Sigmoid colon (tissue), 7 donors: ENCODE measurements at regions of chr3 and their contacts with region 1.

Region 1: GRCh38 chr3:152524198-152525140 is 255.7 kb downstream of the MBNL1 start:
- DNase-seq: no peak
- H3K4me3 ChIP-seq: no peak overlapping the region
- H3K27ac ChIP-seq: no peak overlapping the region
- H3K4me1 ChIP-seq: peaks cover 0 to 8% (median 0%) of the 10 kb centered on the region in 4 donors
- H3K27me3 ChIP-seq: no peaks in the 10 kb centered on the region
- CTCF ChIP-seq: peak; percentile 65 to 90 (median 82)
- EP300 ChIP-seq: no peak
- POLR2A ChIP-seq: no peak

Region 2: DNA sequence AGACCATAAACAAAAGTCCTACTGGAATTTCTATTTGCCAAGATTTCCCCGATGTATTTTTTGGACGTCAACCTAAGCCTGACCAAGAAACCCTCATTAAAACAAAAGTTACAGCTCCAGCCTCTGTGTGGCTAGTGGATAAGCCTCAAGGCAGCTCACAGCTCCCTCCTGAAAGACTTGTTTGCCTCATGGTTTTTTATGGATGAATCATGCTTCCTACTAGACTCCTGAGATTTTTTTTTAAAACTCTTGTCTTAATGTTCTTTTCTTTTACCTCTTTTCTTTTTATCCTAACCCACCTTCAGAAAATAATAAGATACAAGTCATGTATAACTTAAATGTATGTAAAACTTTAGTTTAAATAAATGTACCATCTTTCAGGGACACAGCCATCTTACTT is 598.6 kb before region 1 on chr3:
- intact Hi-C with region 1: loop called (anchors 10 kb)
- DNase-seq: no peak
- H3K4me3 ChIP-seq: no peak overlapping the region
- H3K27ac ChIP-seq: peak overlapping the region in 1 of 4 donors; percentile 27
- H3K4me1 ChIP-seq: peaks cover 0 to 39% (median 14%) of the 10 kb centered on the region in 4 donors
- H3K27me3 ChIP-seq: no peaks in the 10 kb centered on the region
- CTCF ChIP-seq: no peak
- EP300 ChIP-seq: no peak
- POLR2A ChIP-seq: no peak

Region 3: DNA sequence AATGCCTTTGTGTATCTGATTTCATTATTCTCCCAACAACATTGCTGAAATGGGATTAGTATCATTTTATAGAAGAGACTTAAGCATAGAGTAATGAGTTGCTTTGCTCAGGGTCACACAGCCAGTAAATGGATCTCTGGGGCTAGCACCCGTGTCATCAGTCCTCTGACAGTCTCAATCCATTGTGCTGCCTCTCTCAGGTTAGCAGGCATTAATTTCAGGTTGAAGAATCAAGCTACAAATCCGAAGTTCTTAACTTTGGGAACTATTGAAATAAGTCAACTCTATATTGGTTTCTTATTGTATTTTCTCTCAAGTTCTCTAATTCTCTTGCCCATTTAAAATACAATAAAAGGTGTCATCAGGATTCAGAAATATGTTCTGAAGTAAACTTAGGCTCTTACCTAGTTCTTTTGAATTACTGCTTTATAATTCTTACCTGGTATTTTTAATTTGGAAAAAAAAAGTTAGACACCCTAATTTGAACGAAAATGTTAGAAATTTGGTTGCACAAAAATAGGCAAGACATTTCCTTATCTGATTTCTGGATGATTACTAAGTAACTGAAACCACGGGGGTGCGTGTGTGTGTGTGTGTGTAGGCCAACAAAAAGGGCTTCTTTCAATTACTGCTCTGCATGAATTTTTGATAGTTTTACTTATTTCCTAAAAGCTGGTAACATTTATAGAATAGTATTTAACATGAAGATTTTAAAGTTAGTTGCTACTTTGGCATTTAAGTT is 65.9 kb before region 1 on chr3:
- intact Hi-C with region 1: no loop called
- DNase-seq: no peak
- H3K4me3 ChIP-seq: no peak overlapping the region
- H3K27ac ChIP-seq: peak overlapping the region in 2 of 4 donors; percentile 42 to 44
- H3K4me1 ChIP-seq: peaks cover 0 to 89% (median 57%) of the 10 kb centered on the region in 4 donors
- H3K27me3 ChIP-seq: no peaks in the 10 kb centered on the region
- CTCF ChIP-seq: no peak
- EP300 ChIP-seq: no peak
- POLR2A ChIP-seq: no peak

Region 4: DNA sequence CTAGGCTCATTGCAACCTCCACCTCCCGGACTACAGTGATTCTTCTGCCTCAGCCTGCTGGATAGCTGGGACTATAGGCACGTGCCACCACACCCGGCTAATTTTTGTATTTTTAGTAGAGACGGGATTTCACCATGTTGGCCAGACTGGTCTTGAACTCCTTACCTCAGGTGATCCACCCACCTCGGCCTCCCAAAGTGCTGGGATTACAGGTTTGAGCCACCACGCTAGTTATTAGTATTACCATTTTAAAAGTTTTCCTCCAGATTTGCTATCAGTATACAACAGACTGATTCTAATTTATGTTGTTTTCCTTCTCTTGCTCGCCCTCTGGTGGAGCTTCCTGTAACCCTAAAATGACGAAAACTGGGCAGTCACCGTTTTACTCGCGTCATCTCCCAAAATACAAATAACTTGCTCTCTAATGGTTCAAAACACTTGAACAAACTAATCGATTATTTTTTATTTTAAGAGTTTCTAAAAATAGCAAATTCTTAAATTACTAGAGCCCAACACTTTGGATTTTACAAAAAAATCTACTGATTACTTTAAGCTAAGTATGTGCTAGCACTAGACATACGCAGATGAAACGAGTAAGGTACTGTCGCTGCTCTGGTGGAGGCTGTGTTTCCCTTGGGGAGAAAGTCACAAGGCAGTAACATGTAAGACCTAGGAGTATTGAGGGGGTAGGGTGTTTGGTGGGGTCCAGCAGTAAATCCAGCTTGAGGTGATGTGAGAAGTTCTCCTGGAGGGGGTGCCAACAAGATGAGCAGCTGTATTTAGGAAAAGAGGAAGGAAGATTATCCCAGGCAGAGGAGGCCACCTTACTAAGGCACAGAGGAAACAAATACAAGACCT is 52.4 kb before region 1 on chr3:
- intact Hi-C with region 1: loop called (anchors 5 kb)
- DNase-seq: peak; percentile 73
- H3K4me3 ChIP-seq: peak overlapping the region in 3 of 4 donors; percentile 8 to 16 (median 15)
- H3K27ac ChIP-seq: peak overlapping the region in 2 of 4 donors; percentile 43 to 44
- H3K4me1 ChIP-seq: no peaks in the 10 kb centered on the region
- H3K27me3 ChIP-seq: no peaks in the 10 kb centered on the region
- CTCF ChIP-seq: peak in 3 of 4 experiments; percentile 48 to 67 (median 59)
- EP300 ChIP-seq: no peak
- POLR2A ChIP-seq: no peak